Activated CD8-positive, alpha-beta T cell treated with anti-CD3 and anti-CD28 coated beads for 36 hours (primary cell): ENCODE measurements at regions of chr4 and their contacts with region 1.

Region 1: GRCh38 chr4:55345980-55346850 is at the start of gene SRD5A3:
- DNase-seq: peak; percentile 83
- ATAC-seq: peak; percentile 89
- H3K4me3 Mint-ChIP-seq: peak within 1 kb of the TSS; percentile 83
- H3K27ac Mint-ChIP-seq: peak within 1 kb of the TSS; percentile 91
- H3K4me1 Mint-ChIP-seq: peaks cover 21% of the 10 kb centered on the region
- H3K27me3 Mint-ChIP-seq: no peaks in the 10 kb centered on the region
- CTCF ChIP-seq: peak; percentile 98
- total RNA-seq, gene SRD5A3: 12.9 to 15.9 TPM

Region 2: GRCh38 chr4:55321707-55322264 is 24.4 kb before region 1 on chr4:
- CTCF ChIA-PET with region 1: interaction called, 22 read pairs
- POLR2A ChIA-PET with region 1: interaction called, 5 read pairs
- intact Hi-C with region 1: no loop called
- DNase-seq: peak; percentile 88
- ATAC-seq: peak; percentile 55
- H3K4me3 Mint-ChIP-seq: no peak overlapping the region
- H3K27ac Mint-ChIP-seq: no peak overlapping the region
- H3K4me1 Mint-ChIP-seq: peaks cover 30% of the 10 kb centered on the region
- H3K27me3 Mint-ChIP-seq: peaks cover 3% of the 10 kb centered on the region
- CTCF ChIP-seq: peak; percentile 81

Region 3: GRCh38 chr4:55330241-55330640 is 16.0 kb before region 1 on chr4:
- CTCF ChIA-PET with region 1: interaction called, 22 read pairs
- POLR2A ChIA-PET with region 1: interaction called, 6 read pairs
- intact Hi-C with region 1: no loop called
- DNase-seq: no peak
- ATAC-seq: no peak
- H3K4me3 Mint-ChIP-seq: no peak overlapping the region
- H3K27ac Mint-ChIP-seq: no peak overlapping the region
- H3K4me1 Mint-ChIP-seq: peaks cover 3% of the 10 kb centered on the region
- H3K27me3 Mint-ChIP-seq: peaks cover 3% of the 10 kb centered on the region
- CTCF ChIP-seq: no peak

Region 4: DNA sequence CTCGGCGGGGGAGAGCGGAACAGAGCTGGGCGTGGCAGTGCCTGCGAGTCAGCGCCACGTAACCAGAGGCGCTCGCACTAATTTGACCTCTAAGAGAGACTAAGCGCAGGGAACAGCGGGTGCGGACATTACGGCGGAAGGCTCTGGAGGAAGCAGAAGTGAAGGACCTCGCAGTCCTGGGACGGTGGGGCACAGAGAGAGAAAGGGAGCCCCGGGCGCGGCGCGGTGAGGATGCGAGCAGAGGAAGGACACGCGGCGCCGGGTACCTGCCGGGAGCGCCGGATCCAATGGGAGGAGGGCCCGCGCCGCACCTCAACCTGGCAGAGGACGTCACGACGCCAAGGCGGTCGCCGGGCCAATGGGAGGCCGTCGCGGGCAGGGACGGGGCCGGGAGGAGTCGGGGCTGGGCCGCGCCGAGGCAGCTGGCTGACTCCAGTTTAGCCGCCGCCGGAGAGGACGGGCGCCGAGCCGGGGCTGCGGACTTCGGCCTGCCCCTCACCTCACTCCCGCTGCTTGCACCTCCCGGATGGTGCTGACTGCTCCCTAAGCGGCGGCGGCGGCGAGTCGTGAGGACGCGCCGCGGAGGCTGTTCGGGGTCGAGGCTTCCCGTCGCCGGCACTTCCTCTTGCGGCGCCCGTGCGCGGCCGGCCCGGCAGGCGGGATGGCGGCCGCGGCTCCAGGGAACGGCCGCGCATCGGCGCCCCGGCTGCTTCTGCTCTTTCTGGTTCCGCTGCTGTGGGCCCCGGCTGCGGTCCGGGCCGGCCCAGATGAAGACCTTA is 49.5 kb after region 1 on chr4 and contains the start of gene TMEM165:
- CTCF ChIA-PET with region 1: interaction called, 28 read pairs
- POLR2A ChIA-PET with region 1: interaction called, 10 read pairs
- intact Hi-C with region 1: loop called (anchors 2 kb)
- DNase-seq: peak; percentile 93
- ATAC-seq: peak; percentile 95
- H3K4me3 Mint-ChIP-seq: peak within 1 kb of the TSS; percentile 95
- H3K27ac Mint-ChIP-seq: peak within 1 kb of the TSS; percentile 95
- H3K4me1 Mint-ChIP-seq: peaks cover 35% of the 10 kb centered on the region
- H3K27me3 Mint-ChIP-seq: no peaks in the 10 kb centered on the region
- CTCF ChIP-seq: no peak
- total RNA-seq, gene TMEM165: 46.6 to 46.9 TPM

Region 5: DNA sequence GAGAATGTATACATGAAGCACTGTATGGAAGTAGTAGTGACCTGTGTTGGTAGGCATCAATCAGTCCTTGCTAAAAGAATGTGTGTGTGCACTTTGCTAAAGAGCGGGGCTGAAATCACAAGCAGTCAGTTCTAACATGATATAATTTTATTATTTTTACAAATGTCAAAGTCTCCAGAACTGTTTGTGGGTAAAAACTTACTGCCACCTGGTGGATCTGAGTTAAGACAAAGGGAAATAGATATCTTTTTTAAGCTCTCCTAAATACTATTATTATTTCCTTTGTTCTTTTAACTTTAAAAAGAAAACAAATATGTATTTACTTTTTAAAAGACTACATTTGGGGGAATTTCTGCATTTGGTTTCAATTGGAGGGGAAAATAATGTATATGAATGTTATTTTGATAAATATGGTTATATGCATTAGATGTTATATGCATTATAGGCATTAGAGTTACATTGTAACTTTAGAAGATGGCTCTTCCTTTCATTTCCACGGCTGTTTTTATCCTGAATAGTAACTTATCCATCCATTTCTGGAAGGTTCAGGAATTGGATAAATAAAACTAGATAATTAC is 208.3 kb after region 1 on chr4:
- CTCF ChIA-PET with region 1: interaction called, 8 read pairs
- POLR2A ChIA-PET with region 1: no interaction called
- intact Hi-C with region 1: loop called (anchors 5 kb)
- DNase-seq: no peak
- ATAC-seq: no peak
- H3K4me3 Mint-ChIP-seq: no peak overlapping the region
- H3K27ac Mint-ChIP-seq: no peak overlapping the region
- H3K4me1 Mint-ChIP-seq: peaks cover 17% of the 10 kb centered on the region
- H3K27me3 Mint-ChIP-seq: peaks cover 31% of the 10 kb centered on the region
- CTCF ChIP-seq: peak; percentile 58

Region 6: DNA sequence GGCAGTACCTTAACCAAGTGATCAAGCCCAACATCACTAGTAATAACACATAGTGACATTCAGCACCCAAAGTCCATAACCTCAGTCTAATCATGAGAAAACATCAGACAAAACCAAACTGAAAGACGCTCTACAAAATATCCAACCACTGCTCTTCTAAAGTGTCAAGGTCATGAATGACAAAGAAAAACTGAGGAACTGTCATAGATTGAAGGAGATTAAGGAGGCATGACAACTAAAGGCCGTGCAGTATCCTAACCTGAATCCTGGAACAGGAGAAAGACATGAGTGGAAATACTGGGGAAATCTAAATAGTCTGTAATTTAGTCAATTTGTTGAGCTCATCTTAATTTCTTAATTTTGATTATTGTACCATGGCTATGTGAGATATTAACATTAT is 435.1 kb after region 1 on chr4:
- CTCF ChIA-PET with region 1: no interaction called
- POLR2A ChIA-PET with region 1: no interaction called
- intact Hi-C with region 1: no loop called
- DNase-seq: no peak
- ATAC-seq: no peak
- H3K4me3 Mint-ChIP-seq: no peak overlapping the region
- H3K27ac Mint-ChIP-seq: no peak overlapping the region
- H3K4me1 Mint-ChIP-seq: no peaks in the 10 kb centered on the region
- H3K27me3 Mint-ChIP-seq: peaks cover 1% of the 10 kb centered on the region
- CTCF ChIP-seq: no peak

Region 7: DNA sequence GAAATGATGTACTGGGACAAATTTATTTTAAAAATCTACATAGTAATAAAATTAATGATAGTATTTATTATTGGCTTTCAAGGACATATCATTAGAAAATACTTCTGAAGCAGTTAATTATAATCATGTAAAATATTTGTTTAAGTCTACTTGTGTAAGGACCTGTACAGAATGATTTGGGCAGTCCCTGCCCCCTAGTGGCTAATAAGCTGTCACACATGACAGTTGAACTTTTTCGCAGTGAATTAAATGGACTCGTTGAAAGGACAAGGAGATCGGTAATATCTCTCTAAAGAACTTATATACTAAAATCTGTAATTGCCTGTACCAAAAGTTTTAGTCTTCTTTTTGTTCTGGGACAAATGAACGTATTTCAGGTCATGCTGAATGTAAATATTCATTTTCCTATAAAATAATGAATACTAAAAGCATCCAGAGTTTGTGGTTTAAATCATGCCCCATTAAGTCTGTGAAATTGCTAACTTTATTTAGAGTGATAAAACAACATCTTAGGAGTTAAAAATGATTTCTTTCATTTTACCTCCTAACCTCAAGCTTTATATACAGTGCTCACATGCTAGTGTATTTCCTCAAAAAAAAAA is 520.9 kb after region 1 on chr4:
- CTCF ChIA-PET with region 1: interaction called, 12 read pairs
- POLR2A ChIA-PET with region 1: no interaction called
- intact Hi-C with region 1: no loop called
- DNase-seq: peak; percentile 34
- ATAC-seq: peak; percentile 73
- H3K4me3 Mint-ChIP-seq: no peak overlapping the region
- H3K27ac Mint-ChIP-seq: no peak overlapping the region
- H3K4me1 Mint-ChIP-seq: peaks cover 20% of the 10 kb centered on the region
- H3K27me3 Mint-ChIP-seq: no peaks in the 10 kb centered on the region
- CTCF ChIP-seq: peak; percentile 93